Tibial artery (tissue), 4 donors: ENCODE measurements at regions of chr3 and their contacts with region 1.

Region 1: DNA sequence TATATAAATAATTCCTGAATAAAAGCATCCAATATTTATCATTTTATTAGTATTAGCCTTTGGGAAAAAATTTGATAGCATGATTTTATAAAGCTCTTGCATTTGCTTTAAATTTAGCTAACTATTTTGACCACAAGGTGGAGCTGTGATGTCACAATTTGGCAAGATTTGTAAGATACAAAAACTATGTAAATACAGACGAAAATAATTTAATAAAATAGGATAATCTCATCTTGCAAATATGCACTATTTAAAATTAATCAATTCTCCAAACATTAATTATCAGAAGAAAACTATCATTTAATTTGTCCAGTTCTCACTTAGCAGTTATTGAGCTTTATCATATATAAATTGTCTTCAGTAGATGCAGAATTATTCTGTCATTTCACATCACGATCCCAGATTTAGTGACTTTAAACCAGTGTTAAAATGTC is 95.4 kb downstream of the PLOD2 start:
- DNase-seq: no peak
- H3K4me3 ChIP-seq: no peak overlapping the region
- H3K27ac ChIP-seq: peak overlapping the region in 1 of 2 donors; percentile 14
- H3K4me1 ChIP-seq: peaks cover 0 to 16% (median 0%) of the 10 kb centered on the region in 4 donors
- H3K27me3 ChIP-seq: no peaks in the 10 kb centered on the region
- CTCF ChIP-seq: peak; percentile 64 to 70

Region 2: DNA sequence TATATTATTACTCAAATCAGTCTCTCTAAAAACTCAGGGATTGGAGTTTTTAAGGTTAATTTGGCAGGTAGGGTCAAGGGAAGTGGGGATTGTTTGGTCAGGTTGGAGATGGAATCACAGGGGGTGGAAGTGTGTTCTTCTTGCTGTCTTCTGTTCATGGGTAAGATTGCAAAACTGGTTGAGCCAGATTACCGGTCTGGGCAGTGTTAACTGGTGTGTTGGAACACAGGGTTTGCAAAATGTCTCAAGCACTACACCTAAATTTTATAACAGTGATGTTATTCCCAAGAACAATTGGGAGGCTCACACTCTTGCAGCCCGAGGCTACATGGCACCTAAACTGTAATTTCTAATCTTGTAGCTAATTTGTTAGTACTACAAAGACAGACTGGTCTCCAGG is 330.0 kb before region 1 on chr3:
- intact Hi-C with region 1: no loop called
- DNase-seq: no peak
- H3K4me3 ChIP-seq: no peak overlapping the region
- H3K27ac ChIP-seq: no peak overlapping the region
- H3K4me1 ChIP-seq: no peaks in the 10 kb centered on the region
- H3K27me3 ChIP-seq: no peaks in the 10 kb centered on the region
- CTCF ChIP-seq: no peak

Region 3: DNA sequence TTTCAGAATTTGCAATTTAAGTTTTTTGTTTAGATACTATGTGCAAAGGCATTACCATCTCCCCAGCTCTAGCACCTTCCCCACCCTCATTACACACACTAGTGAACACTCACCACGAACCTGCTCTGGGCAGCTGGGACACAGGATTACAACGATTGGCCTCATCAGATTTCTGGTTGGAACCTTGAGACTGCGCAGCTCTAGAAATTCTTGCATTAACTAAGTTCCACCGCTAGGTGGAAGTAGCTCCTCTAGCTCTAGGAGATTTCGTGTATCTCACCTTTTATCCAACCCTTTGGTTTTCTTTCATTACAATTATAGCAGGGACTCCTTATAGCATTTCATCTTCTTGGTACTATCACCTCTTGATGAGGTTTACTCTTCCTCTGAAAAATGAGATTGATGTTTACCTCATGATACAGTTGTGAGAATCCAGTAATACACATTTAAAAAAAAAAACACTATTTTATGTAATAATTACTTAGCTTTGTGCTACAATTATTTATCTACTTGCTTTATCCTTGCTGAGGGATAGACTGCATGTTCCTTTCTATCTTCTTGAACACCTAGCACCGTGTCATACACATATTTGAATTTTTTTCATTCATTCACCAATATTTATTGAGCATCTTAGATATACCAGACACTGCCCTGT is 124.1 kb after region 1 on chr3:
- intact Hi-C with region 1: loop called (anchors 5 kb)
- DNase-seq: no peak
- H3K4me3 ChIP-seq: no peak overlapping the region
- H3K27ac ChIP-seq: no peak overlapping the region
- H3K4me1 ChIP-seq: no peaks in the 10 kb centered on the region
- H3K27me3 ChIP-seq: no peaks in the 10 kb centered on the region
- CTCF ChIP-seq: peak; percentile 63 to 70